GM10248 (cell line): ENCODE measurements at regions of chr16 and their contacts with region 1.

Region 1: GRCh38 chr16:28218104-28218503 is 6.3 kb upstream of the XPO6 start:
- DNase-seq: peak; percentile 67
- CTCF ChIP-seq: peak; percentile 69

Region 2: GRCh38 chr16:27972500-27972899 is 245.6 kb before region 1 on chr16:
- CTCF ChIA-PET with region 1: interaction called, 34 read pairs
- POLR2A ChIA-PET with region 1: no interaction called
- DNase-seq: peak; percentile 72
- CTCF ChIP-seq: peak; percentile 75

Region 3: GRCh38 chr16:28140788-28141618 is 77.1 kb before region 1 on chr16:
- CTCF ChIA-PET with region 1: interaction called, 17 read pairs
- POLR2A ChIA-PET with region 1: no interaction called
- DNase-seq: peak; percentile 72
- CTCF ChIP-seq: no peak